ENCODE measurements at regions of chr22 and their contacts with region 1.

Region 1: DNA sequence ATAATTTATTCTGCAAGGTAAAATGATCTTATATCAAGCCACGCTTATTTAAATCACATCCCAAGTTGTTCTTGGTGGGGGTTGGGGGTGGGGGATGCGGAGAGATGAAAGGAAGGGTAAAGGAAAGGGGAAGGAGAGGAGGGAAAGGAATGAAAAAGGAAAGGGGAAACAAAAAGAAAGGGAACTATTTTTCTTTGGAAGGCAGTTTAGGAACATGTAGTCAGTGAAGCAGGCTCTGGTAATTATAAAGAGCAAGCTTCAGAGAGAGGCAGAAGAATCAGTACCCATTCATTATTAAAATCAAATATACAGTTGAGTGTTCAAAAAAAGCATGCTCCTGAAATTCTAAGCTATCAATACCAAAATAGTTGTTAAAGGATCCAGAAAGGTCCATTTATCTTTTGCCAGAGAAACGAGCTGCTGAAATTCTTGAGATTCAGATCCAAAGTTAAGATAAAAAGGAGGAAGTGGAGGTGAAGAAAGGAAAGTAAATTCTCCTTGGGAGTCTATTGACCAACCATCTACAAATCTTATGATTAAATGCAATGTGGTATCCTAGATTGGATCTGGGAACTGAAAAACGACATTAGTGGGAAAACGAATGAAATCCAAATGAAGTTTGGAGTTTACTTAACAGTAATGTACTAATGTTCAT is 107.4 kb downstream of the SGSM3 start:
- DNase-seq: no peak
- ATAC-seq: no peak
- H3K4me3 ChIP-seq: no peak overlapping the region
- H3K27ac ChIP-seq: peak overlapping the region; percentile 30 to 34; a peak in 4 of 6 replicates
- H3K4me1 ChIP-seq: peaks cover 70% of the 10 kb centered on the region
- CTCF ChIP-seq: no peak
- EP300 ChIP-seq: no peak
- POLR2A ChIP-seq: no peak
- RAD21 ChIP-seq: no peak

Region 2: GRCh38 chr22:40374567-40374966 is 103.2 kb before region 1 on chr22:
- CTCF ChIA-PET with region 1: no interaction called
- POLR2A ChIA-PET with region 1: interaction called, 11 read pairs
- DNase-seq: no peak
- ATAC-seq: no peak
- H3K4me3 ChIP-seq: no peak overlapping the region
- H3K27ac ChIP-seq: no peak overlapping the region
- H3K4me1 ChIP-seq: peaks cover 3% of the 10 kb centered on the region; the same call in 1 of the 3 replicates
- CTCF ChIP-seq: no peak
- EP300 ChIP-seq: no peak
- POLR2A ChIP-seq: no peak
- RAD21 ChIP-seq: no peak

Region 3: DNA sequence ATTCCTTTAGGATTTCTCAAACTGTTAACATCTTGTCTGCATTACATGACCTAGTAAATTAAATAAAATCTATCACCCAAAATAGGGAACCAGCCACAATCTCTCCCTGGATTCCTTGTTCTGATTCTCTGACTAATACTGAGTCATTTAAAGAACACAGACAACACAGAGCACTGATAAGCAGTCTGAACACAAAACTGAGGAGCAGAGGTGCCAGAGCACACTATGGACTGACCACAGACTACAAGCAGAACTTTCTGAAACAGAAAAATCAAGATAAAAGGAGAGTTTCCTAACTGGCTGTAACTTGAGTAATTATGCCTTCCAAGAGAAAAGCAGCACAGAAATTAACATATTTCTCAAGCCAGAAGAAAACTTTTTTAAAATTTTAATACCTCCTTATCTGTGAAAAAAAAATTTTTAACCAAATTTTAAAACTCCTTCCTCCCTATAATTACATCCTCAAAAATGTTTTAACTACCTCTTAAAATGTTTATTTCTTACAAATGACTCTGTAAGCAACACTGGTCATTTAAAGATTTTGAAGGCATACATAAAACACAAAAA is 21.5 kb after region 1 on chr22:
- CTCF ChIA-PET with region 1: no interaction called
- POLR2A ChIA-PET with region 1: no interaction called
- DNase-seq: peak; percentile 60 to 89
- ATAC-seq: peak; percentile 86 to 92
- H3K4me3 ChIP-seq: peak overlapping the region; percentile 25; the same call in 2 of the 3 replicates
- H3K27ac ChIP-seq: peak overlapping the region; percentile 96 to 97
- H3K4me1 ChIP-seq: peaks cover 61% of the 10 kb centered on the region
- CTCF ChIP-seq: no peak
- EP300 ChIP-seq: peak; percentile 54 to 58; a peak in 3 of 5 replicates
- POLR2A ChIP-seq: no peak
- RAD21 ChIP-seq: 0 out of 5 replicates have a peak, but pooled peaks of 1 of the 2 experiments have one; percentile 11